ENCODE measurements at regions of chr1 and their contacts with region 1.

Region 1: GRCh38 chr1:58783993-58784757 is at the start of gene JUN:
- DNase-seq: peak; percentile 99
- H3K4me3 ChIP-seq: peak within 1 kb of the TSS; percentile 80 to 93 (median 85)
- H3K4me3 Mint-ChIP-seq: peak within 1 kb of the TSS; percentile 96 to 99
- H3K27ac ChIP-seq: peak within 1 kb of the TSS; percentile 89 to 97
- H3K27ac Mint-ChIP-seq: peak within 1 kb of the TSS; percentile 95 to 99 (median 97)
- H3K4me1 ChIP-seq: peaks cover 28 to 33% of the 10 kb centered on the region in 2 donors
- H3K4me1 Mint-ChIP-seq: peaks cover 23% of the 10 kb centered on the region
- H3K27me3 ChIP-seq: peaks cover 0 to 58% of the 10 kb centered on the region in 2 donors
- H3K27me3 Mint-ChIP-seq: peaks cover 38 to 72% (median 57%) of the 10 kb centered on the region in 3 donors
- CTCF ChIP-seq: no peak
- polyA plus RNA-seq, gene JUN: 29.3 to 330 (median 31.3) TPM

Region 2: DNA sequence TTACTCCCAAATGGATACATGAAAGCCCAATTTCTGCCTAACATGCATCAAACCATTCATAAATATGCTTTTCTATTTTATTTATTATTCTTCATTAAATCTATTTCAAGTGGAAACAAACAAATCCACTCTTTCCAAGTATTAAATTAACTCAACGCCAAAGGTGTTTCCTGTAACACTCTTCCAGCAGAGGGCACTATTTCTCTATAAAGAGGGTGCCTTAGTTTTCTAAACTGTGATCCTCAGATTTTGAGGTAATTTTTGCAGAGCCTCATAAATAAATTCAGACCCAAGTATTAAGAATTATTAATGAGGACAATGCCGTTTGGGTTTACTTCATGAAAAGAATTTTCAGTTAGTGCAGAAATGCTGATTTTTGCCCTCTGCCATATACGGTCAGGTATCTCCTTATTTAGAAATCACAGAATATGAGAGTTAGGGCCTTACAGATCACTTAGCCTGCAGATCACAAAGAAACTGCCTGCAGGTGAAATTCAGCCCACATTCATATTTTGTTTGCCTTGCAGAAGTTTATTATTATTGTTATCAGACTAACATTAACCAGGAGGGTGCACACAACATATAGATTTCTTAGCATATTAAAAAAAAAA is 44.2 kb before region 1 on chr1:
- intact Hi-C with region 1: loop called (anchors 5 kb)
- DNase-seq: peak; percentile 35 to 74 (median 54)
- H3K4me3 ChIP-seq: no peak overlapping the region
- H3K4me3 Mint-ChIP-seq: no peak overlapping the region
- H3K27ac ChIP-seq: peak overlapping the region in 1 of 2 donors; percentile 63
- H3K27ac Mint-ChIP-seq: no peak overlapping the region
- H3K4me1 ChIP-seq: peaks cover 16 to 25% of the 10 kb centered on the region in 2 donors
- H3K4me1 Mint-ChIP-seq: peaks cover 24% of the 10 kb centered on the region
- H3K27me3 ChIP-seq: no peaks in the 10 kb centered on the region
- H3K27me3 Mint-ChIP-seq: peaks cover 2 to 3% (median 2%) of the 10 kb centered on the region in 3 donors
- CTCF ChIP-seq: peak; percentile 92

Region 3: GRCh38 chr1:58883037-58883887 is 99.1 kb after region 1 on chr1:
- intact Hi-C with region 1: loop called (anchors 1 to 5 kb)
- DNase-seq: peak; percentile 95 to 99 (median 99)
- H3K4me3 ChIP-seq: peak overlapping the region in 2 of 3 experiments; percentile 9 to 47
- H3K4me3 Mint-ChIP-seq: peak overlapping the region in 1 of 2 donors; percentile 65
- H3K27ac ChIP-seq: peak overlapping the region; percentile 90 to 94
- H3K27ac Mint-ChIP-seq: peak overlapping the region; percentile 92 to 97 (median 95)
- H3K4me1 ChIP-seq: peaks cover 55 to 61% of the 10 kb centered on the region in 2 donors
- H3K4me1 Mint-ChIP-seq: peaks cover 79% of the 10 kb centered on the region
- H3K27me3 ChIP-seq: no peaks in the 10 kb centered on the region
- H3K27me3 Mint-ChIP-seq: peaks cover 0 to 3% (median 0%) of the 10 kb centered on the region in 3 donors
- CTCF ChIP-seq: no peak

Region 4: GRCh38 chr1:59290193-59290947 is 506.2 kb after region 1 on chr1:
- intact Hi-C with region 1: loop called (anchors 5 kb)
- DNase-seq: peak; percentile 62 to 85 (median 76)
- H3K4me3 ChIP-seq: no peak overlapping the region
- H3K4me3 Mint-ChIP-seq: no peak overlapping the region
- H3K27ac ChIP-seq: peak overlapping the region in 1 of 2 donors; percentile 88
- H3K27ac Mint-ChIP-seq: peak overlapping the region; percentile 2 to 95 (median 90)
- H3K4me1 ChIP-seq: peaks cover 37 to 38% of the 10 kb centered on the region in 2 donors
- H3K4me1 Mint-ChIP-seq: peaks cover 44% of the 10 kb centered on the region
- H3K27me3 ChIP-seq: no peaks in the 10 kb centered on the region
- H3K27me3 Mint-ChIP-seq: no peaks in the 10 kb centered on the region
- CTCF ChIP-seq: peak; percentile 73

Region 5: DNA sequence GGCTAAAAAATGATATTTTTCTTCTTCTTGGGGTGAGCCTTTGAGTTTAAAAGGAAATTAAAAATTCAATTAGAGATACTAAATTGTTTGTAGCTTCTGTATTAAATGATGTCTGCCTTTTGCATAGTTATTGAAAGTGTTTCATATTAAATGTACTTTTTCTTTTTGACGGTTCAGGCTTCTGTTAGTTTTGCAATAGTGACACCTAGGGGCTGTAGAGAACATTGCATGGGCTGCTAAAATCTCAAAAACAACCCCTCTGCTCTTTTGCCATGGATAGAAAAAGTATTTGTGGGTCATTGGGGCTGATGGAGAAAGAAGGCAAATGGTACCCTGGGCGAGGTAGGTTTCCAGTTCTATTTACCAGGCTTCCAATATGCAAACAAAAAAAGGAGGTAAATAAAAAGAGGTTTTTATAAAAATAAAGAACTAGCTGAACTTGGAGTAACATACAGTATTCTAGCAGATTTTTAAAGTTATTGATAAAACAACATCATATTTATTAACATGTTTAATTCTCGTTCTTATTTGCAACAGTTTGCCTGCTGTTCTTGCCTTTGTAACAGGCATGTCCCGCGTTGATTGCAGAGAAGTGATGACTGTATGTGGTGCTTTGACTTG is 915.2 kb after region 1 on chr1:
- intact Hi-C with region 1: loop called in 1 of 2 experiments (anchors 10 kb)
- DNase-seq: peak in 2 of 3 donors; percentile 56 to 57
- H3K4me3 ChIP-seq: peak overlapping the region in 1 of 3 experiments; percentile 8
- H3K4me3 Mint-ChIP-seq: no peak overlapping the region
- H3K27ac ChIP-seq: peak overlapping the region in 1 of 2 donors; percentile 75
- H3K27ac Mint-ChIP-seq: peak overlapping the region in 5 of 7 donors; percentile 17 to 86 (median 51)
- H3K4me1 ChIP-seq: peaks cover 41 to 44% of the 10 kb centered on the region in 2 donors
- H3K4me1 Mint-ChIP-seq: peaks cover 42% of the 10 kb centered on the region
- H3K27me3 ChIP-seq: no peaks in the 10 kb centered on the region
- H3K27me3 Mint-ChIP-seq: no peaks in the 10 kb centered on the region
- CTCF ChIP-seq: peak; percentile 89

Measured in CD14-positive monocyte (primary cell).